Sigmoid colon (tissue), 7 donors: ENCODE measurements at regions of chr9 and their contacts with region 1.

Region 1: GRCh38 chr9:93134015-93134739 is at the start of gene NINJ1:
- DNase-seq: peak; percentile 88
- H3K4me3 ChIP-seq: peak within 1 kb of the TSS; percentile 60 to 97 (median 92)
- H3K27ac ChIP-seq: peak within 1 kb of the TSS; percentile 96 to 100 (median 98)
- H3K4me1 ChIP-seq: peaks cover 0 to 66% (median 59%) of the 10 kb centered on the region in 4 donors
- H3K27me3 ChIP-seq: no peaks in the 10 kb centered on the region
- CTCF ChIP-seq: peak in 1 of 4 experiments; percentile 7
- EP300 ChIP-seq: no peak
- POLR2A ChIP-seq: peak; percentile 66 to 71
- total RNA-seq, gene NINJ1: 56.5 to 116 (median 69.6) TPM

Region 2: GRCh38 chr9:92860867-92861266 is 273.3 kb before region 1 on chr9:
- intact Hi-C with region 1: no loop called
- DNase-seq: no peak
- H3K4me3 ChIP-seq: no peak overlapping the region
- H3K27ac ChIP-seq: no peak overlapping the region
- H3K4me1 ChIP-seq: peaks cover 0 to 4% (median 0%) of the 10 kb centered on the region in 4 donors
- H3K27me3 ChIP-seq: no peaks in the 10 kb centered on the region
- CTCF ChIP-seq: no peak
- EP300 ChIP-seq: no peak
- POLR2A ChIP-seq: no peak

Region 3: GRCh38 chr9:93003552-93004407 is 130.4 kb before region 1 on chr9:
- intact Hi-C with region 1: loop called (anchors 10 kb)
- DNase-seq: no peak
- H3K4me3 ChIP-seq: peak overlapping the region in 2 of 4 donors; percentile 15 to 18
- H3K27ac ChIP-seq: no peak overlapping the region
- H3K4me1 ChIP-seq: peaks cover 0 to 7% (median 5%) of the 10 kb centered on the region in 4 donors
- H3K27me3 ChIP-seq: no peaks in the 10 kb centered on the region
- CTCF ChIP-seq: peak in 3 of 4 experiments; percentile 63 to 71 (median 66)
- EP300 ChIP-seq: no peak
- POLR2A ChIP-seq: no peak

Region 4: GRCh38 chr9:93095205-93096130 is 38.7 kb before region 1 on chr9:
- intact Hi-C with region 1: loop called (anchors 2 kb)
- DNase-seq: peak; percentile 100
- H3K4me3 ChIP-seq: peak overlapping the region; percentile 36 to 100 (median 92)
- H3K27ac ChIP-seq: peak overlapping the region; percentile 94 to 99 (median 98)
- H3K4me1 ChIP-seq: peaks cover 0 to 56% (median 48%) of the 10 kb centered on the region in 4 donors
- H3K27me3 ChIP-seq: no peaks in the 10 kb centered on the region
- CTCF ChIP-seq: no peak
- EP300 ChIP-seq: no peak
- POLR2A ChIP-seq: peak; percentile 65 to 76

Region 5: GRCh38 chr9:93119953-93120845 is 14.0 kb before region 1 on chr9:
- intact Hi-C with region 1: loop called (anchors 1 kb)
- DNase-seq: peak; percentile 98
- H3K4me3 ChIP-seq: no peak overlapping the region
- H3K27ac ChIP-seq: peak overlapping the region; percentile 76 to 79 (median 78)
- H3K4me1 ChIP-seq: peaks cover 0 to 24% (median 22%) of the 10 kb centered on the region in 4 donors
- H3K27me3 ChIP-seq: no peaks in the 10 kb centered on the region
- CTCF ChIP-seq: peak; percentile 45 to 59 (median 56)
- EP300 ChIP-seq: peak in 1 of 4 donors; percentile 63
- POLR2A ChIP-seq: no peak

Region 6: GRCh38 chr9:93183609-93184431 is 49.6 kb after region 1 on chr9 and contains the start of gene WNK2:
- intact Hi-C with region 1: loop called (anchors 2 kb)
- DNase-seq: no peak
- H3K4me3 ChIP-seq: peak within 1 kb of the TSS; percentile 43 to 87 (median 60)
- H3K27ac ChIP-seq: peak within 1 kb of the TSS; percentile 81 to 89 (median 84)
- H3K4me1 ChIP-seq: peaks cover 4 to 58% (median 55%) of the 10 kb centered on the region in 4 donors
- H3K27me3 ChIP-seq: peaks cover 0 to 6% (median 0%) of the 10 kb centered on the region in 3 donors
- CTCF ChIP-seq: no peak
- EP300 ChIP-seq: no peak
- POLR2A ChIP-seq: no peak
- total RNA-seq, gene WNK2: 16.0 to 95.8 (median 29.0) TPM